ENCODE measurements at regions of chr3 and their contacts with region 1.

Region 1: DNA sequence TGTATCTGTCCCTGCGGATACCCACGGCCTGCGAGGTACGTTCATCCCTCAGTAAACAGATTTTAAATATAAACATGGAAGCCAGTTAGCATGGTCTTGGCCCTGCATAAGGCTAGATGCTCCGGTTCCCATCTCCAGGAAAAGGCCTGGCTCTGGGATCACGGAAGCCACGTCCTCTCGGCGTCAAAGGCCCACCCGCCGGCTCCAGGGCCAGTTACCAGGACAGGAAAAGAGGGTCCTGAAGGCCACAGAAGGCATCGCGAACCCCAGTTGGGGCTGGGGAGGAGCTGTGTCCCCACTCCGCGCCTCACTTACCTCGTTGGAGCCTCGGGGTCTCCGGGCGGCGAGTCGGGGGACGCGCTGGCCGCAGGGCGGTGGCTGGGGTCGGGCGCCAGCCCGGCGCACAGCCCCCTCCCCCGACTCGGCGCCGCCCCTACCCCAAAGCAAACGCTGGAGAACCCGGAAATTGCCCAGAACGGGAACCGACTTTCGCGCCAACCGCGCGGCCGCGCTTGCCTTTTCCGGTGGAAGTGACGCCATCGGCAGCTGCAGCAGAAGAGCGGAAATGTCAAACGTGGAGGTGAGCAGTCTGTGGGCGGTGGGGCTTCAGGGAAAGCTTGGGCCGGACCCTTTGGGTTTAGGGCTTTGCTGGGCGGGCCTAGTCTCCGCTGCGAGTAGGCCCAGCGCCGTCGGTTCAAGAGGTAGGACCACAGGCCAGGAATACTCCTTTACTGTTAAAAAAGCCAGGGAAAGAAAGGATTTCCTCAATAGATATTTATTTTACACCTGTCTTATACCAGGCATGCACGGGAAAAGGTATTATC is at the start of gene TOPBP1:
- ATAC-seq: peak; percentile 87 to 96 (median 94)
- H3K4me3 ChIP-seq: peak within 1 kb of the TSS; percentile 72 to 94 (median 76)
- H3K27ac ChIP-seq: peak within 1 kb of the TSS; percentile 87 to 96
- H3K4me1 ChIP-seq: peaks cover 18 to 20% of the 10 kb centered on the region in 2 donors
- total RNA-seq, gene TOPBP1: 12.9 to 46.7 (median 35.2) TPM

Region 2: DNA sequence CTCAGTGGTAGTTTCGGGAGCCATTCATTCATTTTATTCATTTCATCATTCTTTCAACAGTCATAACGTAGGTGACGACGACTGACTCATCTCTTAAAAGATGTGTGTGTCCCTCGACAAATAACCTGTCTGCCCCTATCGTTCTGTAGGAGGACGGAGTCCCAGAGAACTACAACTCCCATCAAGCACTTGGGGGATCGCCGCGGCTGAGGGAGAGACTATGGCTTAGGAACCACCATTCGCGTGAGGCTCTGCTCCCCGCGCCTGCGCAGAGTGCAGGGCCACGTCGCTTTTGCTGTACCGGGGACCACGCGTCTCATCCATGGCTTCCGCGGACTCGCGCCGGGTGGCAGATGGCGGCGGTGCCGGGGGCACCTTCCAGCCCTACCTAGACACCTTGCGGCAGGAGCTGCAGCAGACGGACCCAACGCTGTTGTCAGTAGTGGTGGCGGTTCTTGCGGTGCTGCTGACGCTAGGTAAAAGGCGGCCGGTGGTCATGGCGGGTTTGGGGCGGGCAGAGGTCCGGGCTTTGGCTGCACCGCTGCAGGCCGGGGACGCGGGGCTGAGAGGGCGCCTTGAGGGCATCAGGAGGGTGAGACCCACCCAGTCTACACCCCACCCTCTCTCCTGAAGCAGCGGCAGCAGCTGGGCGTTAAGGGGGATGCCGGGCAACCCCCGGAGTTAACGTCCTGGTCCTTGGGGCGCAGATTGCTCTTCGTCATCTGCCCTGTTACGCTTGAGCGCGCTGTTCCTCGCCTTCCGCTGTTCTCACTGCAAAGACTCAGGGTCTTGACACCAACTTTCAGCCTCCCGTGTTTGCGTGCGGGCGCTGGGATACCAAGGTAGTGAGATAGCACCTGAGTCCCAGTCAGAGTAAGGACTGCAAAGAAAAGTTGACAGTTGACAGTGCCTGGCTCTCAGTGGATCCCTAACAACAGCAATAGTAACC is 144.1 kb after region 1 on chr3 and contains the start of gene SRPRB:
- in situ Hi-C with region 1: loop called in 1 of 9 experiments (anchors 10 kb)
- ATAC-seq: peak; percentile 95 to 99 (median 97)
- H3K4me3 ChIP-seq: peak within 1 kb of the TSS; percentile 70 to 94 (median 83)
- H3K27ac ChIP-seq: peak within 1 kb of the TSS; percentile 88 to 96
- H3K4me1 ChIP-seq: peaks cover 0 to 7% of the 10 kb centered on the region in 2 donors
- total RNA-seq, gene SRPRB: 39.2 to 150 (median 62.6) TPM

Region 3: DNA sequence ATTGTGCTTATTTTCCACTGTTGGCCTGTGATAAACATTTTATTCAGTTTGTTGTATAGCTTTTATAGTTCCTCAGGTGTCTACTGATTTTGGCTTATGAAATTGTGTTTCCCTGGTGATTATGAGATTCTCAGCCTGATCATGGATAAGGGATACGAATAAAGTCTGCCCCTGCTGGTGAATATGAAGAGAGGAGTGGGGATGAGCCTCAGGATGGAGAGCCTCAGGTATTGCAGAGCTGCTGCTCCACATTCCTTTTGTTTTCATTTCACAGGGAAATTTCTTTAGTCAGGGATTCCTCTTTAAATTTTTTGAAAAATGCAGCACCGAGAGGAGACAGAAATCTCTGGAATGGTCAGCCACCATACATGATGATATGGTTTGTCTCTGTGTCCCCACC is 248.8 kb after region 1 on chr3:
- in situ Hi-C with region 1: loop called in 2 of 9 experiments (anchors 25 kb)
- ATAC-seq: no peak
- H3K4me3 ChIP-seq: no peak overlapping the region
- H3K27ac ChIP-seq: no peak overlapping the region
- H3K4me1 ChIP-seq: no peaks in the 10 kb centered on the region

Measured in motor neuron (in vitro differentiated cells).